Thyroid gland (tissue), 4 donors: ENCODE measurements at regions of chr14 and their contacts with region 1.

Region 1: DNA sequence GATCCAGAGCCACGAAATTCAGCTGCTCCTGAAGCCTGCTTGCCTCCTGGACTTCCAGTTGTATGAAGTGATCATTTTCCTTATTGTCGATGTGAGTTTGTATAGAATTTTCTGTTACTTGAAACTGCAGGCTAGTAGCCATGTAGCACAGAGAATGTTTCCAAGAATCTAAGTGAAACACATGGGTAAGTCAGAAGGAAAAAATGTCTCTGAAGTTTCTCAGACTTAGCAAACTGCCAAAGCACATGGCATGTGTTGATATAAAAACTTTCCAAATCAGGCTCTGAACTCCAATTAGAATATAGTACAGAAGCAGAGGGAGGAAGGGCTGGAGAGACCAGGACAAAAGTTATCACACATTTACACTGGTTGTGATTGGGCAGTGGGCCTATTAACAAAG is 9.8 kb upstream of the PCNX1 start:
- DNase-seq: no peak
- H3K4me3 ChIP-seq: no peak overlapping the region
- H3K27ac ChIP-seq: peak overlapping the region in 1 of 3 donors; percentile 26
- H3K4me1 ChIP-seq: peaks cover 0 to 14% of the 10 kb centered on the region in 2 donors
- H3K27me3 ChIP-seq: no peaks in the 10 kb centered on the region
- CTCF ChIP-seq: no peak
- POLR2A ChIP-seq: no peak

Region 2: GRCh38 chr14:70821584-70822529 is 75.6 kb before region 1 on chr14:
- intact Hi-C with region 1: loop called (anchors 10 kb)
- DNase-seq: peak; percentile 41 to 45
- H3K4me3 ChIP-seq: peak overlapping the region; percentile 10 to 55 (median 22)
- H3K27ac ChIP-seq: peak overlapping the region in 1 of 3 donors; percentile 17
- H3K4me1 ChIP-seq: peaks cover 7 to 9% of the 10 kb centered on the region in 2 donors
- H3K27me3 ChIP-seq: no peaks in the 10 kb centered on the region
- CTCF ChIP-seq: no peak
- POLR2A ChIP-seq: no peak

Region 3: GRCh38 chr14:70882776-70883492 is 14.5 kb before region 1 on chr14:
- intact Hi-C with region 1: no loop called
- DNase-seq: no peak
- H3K4me3 ChIP-seq: no peak overlapping the region
- H3K27ac ChIP-seq: no peak overlapping the region
- H3K4me1 ChIP-seq: peaks cover 3 to 19% of the 10 kb centered on the region in 2 donors
- H3K27me3 ChIP-seq: no peaks in the 10 kb centered on the region
- CTCF ChIP-seq: no peak
- POLR2A ChIP-seq: no peak

Region 4: DNA sequence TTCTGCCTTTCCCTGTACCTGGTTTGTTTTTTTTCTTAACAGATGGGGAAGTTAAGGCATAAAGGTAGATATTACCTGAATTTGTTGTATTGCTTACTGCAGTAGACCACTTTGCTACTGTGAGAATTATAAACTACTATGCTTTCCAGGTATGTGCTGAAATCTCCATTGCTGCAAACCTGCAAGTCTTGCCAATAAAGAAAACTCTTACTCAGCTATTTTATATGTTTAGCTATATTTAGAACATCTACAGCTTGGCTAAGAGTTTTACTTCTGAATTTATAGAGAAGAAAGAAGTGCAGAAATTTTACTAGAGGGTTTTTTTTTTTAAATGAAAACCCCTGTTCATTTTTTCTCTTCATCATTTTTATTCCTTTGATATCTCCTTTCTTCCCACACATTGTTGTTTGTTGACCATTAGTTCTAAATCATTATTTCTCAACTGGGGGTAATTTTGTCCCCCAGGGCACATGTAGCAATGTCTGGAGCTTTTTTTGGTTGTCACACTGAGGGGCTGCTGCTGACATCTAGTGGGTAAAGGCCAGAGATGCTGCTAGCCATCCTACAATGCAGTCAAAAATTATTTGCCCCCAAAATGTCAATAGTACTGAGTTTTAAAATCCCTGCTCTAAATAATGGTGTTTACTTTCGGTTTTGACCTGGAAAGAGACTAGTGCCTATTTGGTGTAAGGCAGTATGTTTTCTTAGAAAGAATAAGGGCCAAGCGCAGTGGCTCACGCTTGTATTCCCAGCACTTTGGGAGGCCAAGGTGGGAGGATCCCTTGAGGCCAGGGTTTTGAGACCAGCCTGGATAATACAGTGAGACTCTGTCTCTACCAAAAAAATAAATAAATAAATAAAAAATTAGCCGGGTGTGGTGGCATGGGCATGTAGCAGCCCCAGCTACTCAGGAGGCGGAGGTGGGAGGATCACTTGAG is 58.3 kb after region 1 on chr14:
- intact Hi-C with region 1: no loop called
- DNase-seq: peak; percentile 15 to 21
- H3K4me3 ChIP-seq: no peak overlapping the region
- H3K27ac ChIP-seq: no peak overlapping the region
- H3K4me1 ChIP-seq: peaks cover 3 to 7% of the 10 kb centered on the region in 2 donors
- H3K27me3 ChIP-seq: no peaks in the 10 kb centered on the region
- CTCF ChIP-seq: peak in 4 of 6 experiments; percentile 40 to 56 (median 52)
- POLR2A ChIP-seq: no peak